ENCODE measurements at regions of chr5 and their contacts with region 1.

Region 1: DNA sequence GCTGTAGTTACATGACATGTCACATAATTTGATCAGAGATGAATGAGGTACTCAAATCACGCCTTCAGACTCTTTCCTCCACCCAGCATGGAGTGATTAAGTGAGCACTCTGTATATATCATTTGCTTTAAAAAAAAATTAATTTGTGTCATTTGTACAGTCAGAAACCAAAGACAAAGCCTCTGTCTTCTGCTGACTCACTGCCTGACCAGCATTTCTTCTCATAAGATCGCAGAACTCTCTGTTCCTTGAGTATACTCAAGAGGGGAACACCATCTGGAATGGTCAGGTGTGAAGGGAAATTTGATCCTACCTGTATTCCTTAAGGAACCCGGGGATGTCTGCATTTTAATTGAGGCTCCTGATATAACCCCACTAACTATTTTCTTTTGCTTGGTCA is 254.4 kb downstream of the FAM114A2 start:
- DNase-seq: no peak
- H3K4me3 ChIP-seq: no peak overlapping the region
- H3K27ac ChIP-seq: no peak overlapping the region
- H3K4me1 ChIP-seq: no peaks in the 10 kb centered on the region
- H3K27me3 ChIP-seq: no peaks in the 10 kb centered on the region
- CTCF ChIP-seq: no peak

Region 2: DNA sequence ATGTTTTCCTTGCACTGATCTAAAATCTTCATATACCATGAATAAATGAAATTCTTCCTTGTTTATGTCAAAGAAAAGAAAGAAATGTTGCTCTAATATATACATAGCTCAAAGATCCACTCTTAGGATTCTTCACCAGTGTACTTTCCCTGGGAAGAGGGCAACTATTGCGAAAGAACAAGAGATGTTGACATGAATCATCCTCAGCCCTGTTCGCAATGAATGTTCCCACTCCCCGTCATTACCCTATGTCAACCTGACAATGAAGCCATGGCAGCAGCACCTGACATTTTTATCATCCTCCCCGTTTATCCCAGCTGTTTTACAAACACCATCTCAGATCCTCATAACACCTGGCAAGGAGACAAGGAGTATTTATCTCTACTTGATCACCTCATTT is 702.9 kb before region 1 on chr5:
- intact Hi-C with region 1: no loop called
- DNase-seq: no peak
- H3K4me3 ChIP-seq: no peak overlapping the region
- H3K27ac ChIP-seq: no peak overlapping the region
- H3K4me1 ChIP-seq: no peaks in the 10 kb centered on the region
- H3K27me3 ChIP-seq: no peaks in the 10 kb centered on the region
- CTCF ChIP-seq: no peak

Region 3: DNA sequence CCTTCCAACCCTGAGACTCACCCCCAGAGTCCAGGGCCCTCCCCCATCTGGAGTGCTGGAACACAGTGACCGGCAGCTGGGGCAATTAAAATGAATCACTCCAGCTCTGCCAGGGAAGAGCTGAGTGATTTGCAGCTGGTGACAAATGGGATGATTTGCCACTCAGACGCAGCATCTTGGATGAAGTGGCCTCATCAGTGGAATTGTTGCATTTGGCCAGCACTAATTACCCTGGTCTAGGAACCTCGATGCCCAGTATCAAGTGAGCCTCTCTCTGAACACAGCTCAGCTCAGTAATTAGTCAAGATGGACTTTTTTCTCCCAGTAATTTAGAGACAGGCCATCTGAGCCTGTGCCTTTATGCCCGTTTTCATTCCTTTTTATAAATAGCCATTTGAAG is 34.3 kb before region 1 on chr5:
- intact Hi-C with region 1: no loop called
- DNase-seq: no peak
- H3K4me3 ChIP-seq: no peak overlapping the region
- H3K27ac ChIP-seq: no peak overlapping the region
- H3K4me1 ChIP-seq: peaks cover 0 to 5% (median 0%) of the 10 kb centered on the region in 4 donors
- H3K27me3 ChIP-seq: no peaks in the 10 kb centered on the region
- CTCF ChIP-seq: no peak

Region 4: DNA sequence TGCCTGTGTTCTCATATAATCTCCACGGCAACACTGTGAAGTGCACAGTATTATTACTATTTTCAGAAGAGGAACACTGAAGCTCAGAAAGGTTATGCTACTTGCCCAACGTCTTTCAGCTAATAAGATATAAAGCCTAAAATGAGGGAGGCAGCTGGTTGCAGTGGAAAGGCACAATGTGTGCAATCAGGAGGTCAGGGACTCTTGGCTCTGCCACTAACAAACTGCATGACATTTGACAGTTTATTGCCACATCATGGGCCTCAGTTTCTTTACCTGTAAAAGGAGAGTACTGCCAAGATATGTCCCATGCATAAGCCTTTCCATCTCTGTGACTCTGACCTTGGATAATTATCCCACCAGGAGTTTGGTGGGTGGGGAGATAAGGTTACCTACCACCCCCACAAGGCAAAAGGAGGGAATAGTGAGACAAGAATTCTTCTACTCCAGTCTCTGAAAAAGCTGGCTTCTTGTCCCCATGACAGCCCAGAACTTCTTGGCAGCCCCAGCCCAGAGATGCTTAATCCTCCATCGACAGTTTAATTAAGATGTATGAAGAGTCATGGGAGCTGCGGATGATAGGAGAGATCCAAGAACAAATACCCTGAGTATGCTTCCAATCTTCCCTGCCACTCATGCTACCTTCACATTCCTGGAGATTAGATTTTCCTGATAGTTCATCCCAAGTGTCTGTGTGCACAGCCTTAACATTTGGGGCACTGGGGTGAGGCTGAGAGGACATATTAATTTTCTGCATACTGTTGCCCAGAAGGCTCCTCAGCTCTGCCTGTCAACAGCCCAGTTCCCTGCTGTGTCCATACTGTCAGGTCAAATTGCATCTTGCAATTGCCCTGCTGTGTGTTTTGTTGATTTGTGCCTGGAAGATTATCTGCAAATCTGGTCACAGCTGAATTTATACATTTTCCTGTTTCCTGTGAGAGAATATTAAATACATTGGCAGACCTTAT is 16.8 kb before region 1 on chr5:
- intact Hi-C with region 1: loop called (anchors 1 kb)
- DNase-seq: no peak
- H3K4me3 ChIP-seq: no peak overlapping the region
- H3K27ac ChIP-seq: no peak overlapping the region
- H3K4me1 ChIP-seq: no peaks in the 10 kb centered on the region
- H3K27me3 ChIP-seq: no peaks in the 10 kb centered on the region
- CTCF ChIP-seq: no peak

Region 5: DNA sequence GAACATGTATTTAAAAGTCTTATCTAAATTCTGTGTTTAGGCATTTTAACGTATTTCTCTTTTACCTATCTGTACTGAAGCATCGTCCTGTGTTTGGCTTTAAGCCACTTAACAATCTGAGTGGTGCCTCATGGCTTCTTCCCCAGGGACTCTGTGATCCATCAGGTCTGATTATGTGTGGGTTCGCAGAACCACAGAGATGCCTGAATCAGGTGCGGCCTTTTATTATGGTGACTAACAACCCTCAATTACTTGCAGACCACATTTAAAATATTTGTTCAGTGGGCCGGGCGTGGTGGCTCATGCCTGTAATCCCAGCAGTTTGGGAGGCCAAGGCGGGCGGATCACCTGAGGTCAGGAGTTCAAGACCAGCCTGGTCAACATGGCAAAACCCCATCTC is 622.0 kb after region 1 on chr5:
- intact Hi-C with region 1: no loop called
- DNase-seq: no peak
- H3K4me3 ChIP-seq: no peak overlapping the region
- H3K27ac ChIP-seq: no peak overlapping the region
- H3K4me1 ChIP-seq: peaks cover 0 to 11% (median 4%) of the 10 kb centered on the region in 4 donors
- H3K27me3 ChIP-seq: no peaks in the 10 kb centered on the region
- CTCF ChIP-seq: no peak

Measured in tibial artery (tissue), 4 donors.